ENCODE measurements at regions of chr6 and their contacts with region 1.

Region 1: DNA sequence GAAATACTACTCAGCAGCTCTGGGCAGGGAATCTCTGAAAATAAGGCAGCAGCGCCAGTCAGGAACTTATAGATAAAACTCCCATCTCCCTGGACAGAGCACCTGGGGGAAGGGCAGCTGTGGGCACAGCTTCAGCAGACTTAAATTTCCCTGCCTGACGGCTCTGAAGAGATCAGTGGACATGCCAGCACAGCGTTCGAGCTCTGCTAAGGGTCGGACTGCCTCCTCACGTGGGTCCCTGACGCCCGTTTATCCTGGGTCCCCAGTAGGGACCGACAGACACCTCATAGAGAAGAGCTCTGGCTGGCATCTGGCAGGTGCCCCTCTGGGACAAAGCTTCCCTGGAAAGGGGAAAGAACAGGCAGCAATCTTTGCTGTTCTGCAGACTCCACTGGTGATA is 59.0 kb downstream of the COL21A1 start:
- DNase-seq: no peak
- H3K4me3 ChIP-seq: no peak overlapping the region
- H3K27ac ChIP-seq: no peak overlapping the region
- H3K4me1 ChIP-seq: peaks cover under 1% of the 10 kb centered on the region
- H3K27me3 ChIP-seq: no peaks in the 10 kb centered on the region
- CTCF ChIP-seq: no peak
- POLR2A ChIP-seq: no peak

Region 2: GRCh38 chr6:55557146-55557545 is 631.3 kb before region 1 on chr6:
- intact Hi-C with region 1: loop called (anchors 5 kb)
- DNase-seq: no peak
- H3K4me3 ChIP-seq: no peak overlapping the region
- H3K27ac ChIP-seq: no peak overlapping the region
- H3K4me1 ChIP-seq: no peaks in the 10 kb centered on the region
- H3K27me3 ChIP-seq: no peaks in the 10 kb centered on the region
- CTCF ChIP-seq: no peak
- POLR2A ChIP-seq: no peak

Region 3: DNA sequence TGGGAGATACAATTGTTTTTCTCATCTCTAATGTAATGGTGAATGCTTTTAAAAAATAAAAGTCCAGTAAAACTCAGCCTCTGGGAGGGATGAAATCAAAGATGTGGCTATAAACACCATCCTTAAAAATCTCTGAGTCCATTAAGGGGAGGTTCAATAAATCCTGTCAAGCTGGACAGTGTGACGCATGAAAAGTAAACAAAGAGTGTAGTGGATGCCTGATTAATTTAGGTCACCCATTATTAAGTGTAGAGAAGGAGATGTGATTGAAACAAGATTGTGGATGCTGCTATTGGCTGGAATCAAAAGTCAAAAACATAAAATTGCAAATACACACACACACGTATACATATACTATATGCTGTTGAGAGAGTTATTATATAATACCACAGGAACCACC is 57.0 kb before region 1 on chr6:
- intact Hi-C with region 1: no loop called
- DNase-seq: no peak
- H3K4me3 ChIP-seq: no peak overlapping the region
- H3K27ac ChIP-seq: no peak overlapping the region
- H3K4me1 ChIP-seq: no peaks in the 10 kb centered on the region
- H3K27me3 ChIP-seq: no peaks in the 10 kb centered on the region
- CTCF ChIP-seq: no peak
- POLR2A ChIP-seq: no peak

Measured in vagina (tissue), 2 donors.